Right lobe of liver (tissue), 6 donors: ENCODE measurements at regions of chr5 and their contacts with region 1.

Region 1: DNA sequence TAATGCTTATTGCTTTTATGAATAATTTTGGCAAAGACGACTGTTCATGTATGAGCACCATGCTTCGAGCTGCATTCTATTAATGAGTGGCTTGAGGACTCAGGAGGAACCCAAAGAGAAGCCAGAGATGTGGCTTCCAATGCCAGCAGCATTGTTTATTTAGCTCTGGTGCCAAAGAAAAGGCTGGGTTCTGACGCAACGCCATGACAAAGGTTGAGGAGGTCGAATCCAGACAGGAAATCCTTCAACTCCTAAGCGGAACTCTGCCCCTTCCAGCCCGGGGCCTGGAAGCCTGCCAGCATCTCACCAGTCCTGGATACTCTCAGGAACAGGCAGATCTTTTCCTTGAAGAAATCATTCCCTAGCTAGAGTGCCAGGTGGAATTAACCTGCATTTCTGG is 104.4 kb downstream of the ARHGAP26 start:
- DNase-seq: peak; percentile 91 to 94 (median 92)
- ATAC-seq: peak; percentile 84 to 93 (median 89)
- H3K4me3 ChIP-seq: no peak overlapping the region
- H3K27ac ChIP-seq: peak overlapping the region in 2 of 3 donors; percentile 2 to 41
- H3K4me1 ChIP-seq: peaks cover 0 to 25% (median 6%) of the 10 kb centered on the region in 4 donors
- H3K27me3 ChIP-seq: no peaks in the 10 kb centered on the region
- CTCF ChIP-seq: no peak
- POLR2A ChIP-seq: no peak

Region 2: GRCh38 chr5:142769741-142770631 is 104.6 kb before region 1 on chr5 and contains the start of gene ARHGAP26:
- intact Hi-C with region 1: loop called in 1 of 2 experiments (anchors 10 kb)
- DNase-seq: peak; percentile 99
- ATAC-seq: peak; percentile 96 to 99 (median 97)
- H3K4me3 ChIP-seq: peak within 1 kb of the TSS; percentile 75 to 87 (median 75)
- H3K27ac ChIP-seq: peak within 1 kb of the TSS; percentile 62 to 82 (median 81)
- H3K4me1 ChIP-seq: no peaks in the 10 kb centered on the region
- H3K27me3 ChIP-seq: no peaks in the 10 kb centered on the region
- CTCF ChIP-seq: peak; percentile 15 to 37 (median 23)
- POLR2A ChIP-seq: peak; percentile 99
- total RNA-seq, gene ARHGAP26: 6.7 to 14.5 (median 8.3) TPM

Region 3: GRCh38 chr5:142816531-142817430 is 57.8 kb before region 1 on chr5:
- intact Hi-C with region 1: loop called in 1 of 2 experiments (anchors 10 kb)
- DNase-seq: peak in 1 of 3 donors; percentile 60
- ATAC-seq: peak in 1 of 4 donors; percentile 11
- H3K4me3 ChIP-seq: no peak overlapping the region
- H3K27ac ChIP-seq: peak overlapping the region in 2 of 3 donors; percentile 60 to 73
- H3K4me1 ChIP-seq: peaks cover 0 to 53% (median 23%) of the 10 kb centered on the region in 4 donors
- H3K27me3 ChIP-seq: no peaks in the 10 kb centered on the region
- CTCF ChIP-seq: no peak
- POLR2A ChIP-seq: no peak